ENCODE measurements at regions of chr14 and their contacts with region 1.

Region 1: DNA sequence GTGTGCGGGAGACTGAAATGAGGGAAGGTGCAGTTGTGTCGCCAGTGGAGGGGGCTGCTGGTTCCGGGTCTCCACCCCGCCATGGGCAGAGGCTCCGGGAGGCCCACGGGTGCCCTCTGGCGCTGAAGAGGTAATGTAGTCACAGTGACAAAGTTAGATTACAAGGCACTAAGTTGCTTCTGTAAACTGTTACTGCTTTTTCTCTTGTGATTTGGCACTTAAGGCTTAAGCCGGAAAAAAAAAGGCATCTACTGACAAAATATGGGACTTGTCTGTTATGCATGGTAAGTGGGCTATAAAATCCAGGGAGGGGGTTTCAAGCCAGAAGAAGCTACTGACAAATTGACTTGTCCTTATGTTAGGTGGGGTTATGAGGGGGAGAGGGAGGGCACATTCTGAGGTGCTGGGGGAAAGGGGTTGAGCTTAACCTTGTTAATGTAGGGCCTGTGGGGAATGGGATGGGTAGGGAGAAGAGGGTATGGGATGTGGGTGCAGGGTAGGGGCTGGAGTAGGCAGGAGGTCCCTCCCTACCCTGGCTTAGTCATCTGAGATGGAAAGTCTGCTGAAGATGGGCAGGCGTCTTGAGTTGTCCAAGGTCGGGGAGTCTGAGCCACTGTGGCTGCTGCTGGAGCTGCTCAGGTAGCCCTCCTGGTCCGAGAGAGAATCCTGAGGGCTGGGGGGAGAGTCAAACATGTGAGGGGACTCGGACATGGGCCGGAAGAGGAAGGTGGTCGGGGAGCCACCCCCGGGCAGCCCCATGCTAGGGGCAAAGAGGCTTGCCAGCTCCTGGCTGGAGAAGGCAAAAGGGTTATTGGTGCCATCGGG is 3.7 kb downstream of the ZFP36L1 start:
- DNase-seq: peak; percentile 84 to 90 (median 87)
- H3K4me3 ChIP-seq: peak overlapping the region; percentile 98 to 100
- H3K4me3 Mint-ChIP-seq: peak overlapping the region; percentile 88 to 100 (median 94)
- H3K27ac ChIP-seq: peak overlapping the region; percentile 99
- H3K27ac Mint-ChIP-seq: peak overlapping the region; percentile 96 to 100 (median 98)
- H3K4me1 ChIP-seq: peaks cover 52% of the 10 kb centered on the region
- H3K4me1 Mint-ChIP-seq: peaks cover 41 to 84% (median 53%) of the 10 kb centered on the region in 4 donors
- H3K27me3 ChIP-seq: no peaks in the 10 kb centered on the region
- H3K27me3 Mint-ChIP-seq: peaks cover 0 to 6% of the 10 kb centered on the region in 2 donors

Region 2: GRCh38 chr14:68248481-68249255 is 540.5 kb before region 1 on chr14:
- CTCF ChIA-PET with region 1: interaction called, 199 read pairs
- POLR2A ChIA-PET with region 1: interaction called, 210 read pairs
- intact Hi-C with region 1: loop called (anchors 1 kb)
- DNase-seq: peak; percentile 43 to 65 (median 62)
- H3K4me3 ChIP-seq: no peak overlapping the region
- H3K4me3 Mint-ChIP-seq: no peak overlapping the region
- H3K27ac ChIP-seq: no peak overlapping the region
- H3K27ac Mint-ChIP-seq: peak overlapping the region in 3 of 7 donors; percentile 55 to 61 (median 61)
- H3K4me1 ChIP-seq: peaks cover 24% of the 10 kb centered on the region
- H3K4me1 Mint-ChIP-seq: peaks cover 12 to 38% (median 24%) of the 10 kb centered on the region in 4 donors
- H3K27me3 ChIP-seq: no peaks in the 10 kb centered on the region
- H3K27me3 Mint-ChIP-seq: no peaks in the 10 kb centered on the region

Region 3: GRCh38 chr14:68283378-68284123 is 505.7 kb before region 1 on chr14:
- CTCF ChIA-PET with region 1: interaction called, 65 read pairs
- POLR2A ChIA-PET with region 1: interaction called, 207 read pairs
- intact Hi-C with region 1: loop called (anchors 1 kb)
- DNase-seq: peak; percentile 47 to 77 (median 68)
- H3K4me3 ChIP-seq: peak overlapping the region in 1 of 2 donors; percentile 1
- H3K4me3 Mint-ChIP-seq: peak overlapping the region in 7 of 8 donors; percentile 44 to 81 (median 75)
- H3K27ac ChIP-seq: peak overlapping the region; percentile 73
- H3K27ac Mint-ChIP-seq: peak overlapping the region; percentile 94 to 99 (median 95)
- H3K4me1 ChIP-seq: peaks cover 74% of the 10 kb centered on the region
- H3K4me1 Mint-ChIP-seq: peaks cover 60 to 90% (median 73%) of the 10 kb centered on the region in 4 donors
- H3K27me3 ChIP-seq: no peaks in the 10 kb centered on the region
- H3K27me3 Mint-ChIP-seq: no peaks in the 10 kb centered on the region

Region 4: DNA sequence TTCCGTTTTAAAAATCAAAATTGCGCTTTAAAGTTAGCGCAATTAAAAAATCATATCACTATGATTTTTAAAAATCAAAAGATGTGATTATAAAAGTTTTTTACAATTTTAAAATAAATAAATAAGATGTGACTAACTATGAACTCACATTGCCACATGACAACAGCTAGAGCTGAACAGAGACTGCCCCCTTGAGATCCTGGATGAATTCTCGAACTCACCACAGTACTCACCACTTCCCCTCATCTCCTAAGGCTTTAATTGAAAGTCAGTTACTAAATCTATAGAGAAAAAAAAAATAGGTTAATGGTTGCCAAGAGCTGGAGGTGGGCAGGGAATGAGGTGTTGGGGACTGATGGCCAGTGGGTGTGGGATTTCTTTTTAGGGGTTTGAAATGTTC is 380.5 kb before region 1 on chr14:
- CTCF ChIA-PET with region 1: interaction called, 9 read pairs
- POLR2A ChIA-PET with region 1: interaction called, 11 read pairs
- intact Hi-C with region 1: no loop called
- DNase-seq: peak in 4 of 5 donors; percentile 7 to 28 (median 18)
- H3K4me3 ChIP-seq: no peak overlapping the region
- H3K4me3 Mint-ChIP-seq: peak overlapping the region in 2 of 8 donors; percentile 9 to 14
- H3K27ac ChIP-seq: no peak overlapping the region
- H3K27ac Mint-ChIP-seq: peak overlapping the region in 1 of 7 donors; percentile 10
- H3K4me1 ChIP-seq: peaks cover 26% of the 10 kb centered on the region
- H3K4me1 Mint-ChIP-seq: peaks cover 27 to 39% (median 31%) of the 10 kb centered on the region in 4 donors
- H3K27me3 ChIP-seq: no peaks in the 10 kb centered on the region
- H3K27me3 Mint-ChIP-seq: no peaks in the 10 kb centered on the region

Region 5: GRCh38 chr14:68440820-68441219 is 348.4 kb before region 1 on chr14:
- CTCF ChIA-PET with region 1: no interaction called
- POLR2A ChIA-PET with region 1: no interaction called
- intact Hi-C with region 1: no loop called
- DNase-seq: no peak
- H3K4me3 ChIP-seq: no peak overlapping the region
- H3K4me3 Mint-ChIP-seq: no peak overlapping the region
- H3K27ac ChIP-seq: no peak overlapping the region
- H3K27ac Mint-ChIP-seq: no peak overlapping the region
- H3K4me1 ChIP-seq: no peaks in the 10 kb centered on the region
- H3K4me1 Mint-ChIP-seq: peaks cover 0 to 5% (median 2%) of the 10 kb centered on the region in 4 donors
- H3K27me3 ChIP-seq: no peaks in the 10 kb centered on the region
- H3K27me3 Mint-ChIP-seq: no peaks in the 10 kb centered on the region

Region 6: GRCh38 chr14:68563246-68564131 is 225.7 kb before region 1 on chr14:
- CTCF ChIA-PET with region 1: interaction called, 4 read pairs
- POLR2A ChIA-PET with region 1: interaction called, 10 read pairs
- intact Hi-C with region 1: no loop called
- DNase-seq: no peak
- H3K4me3 ChIP-seq: no peak overlapping the region
- H3K4me3 Mint-ChIP-seq: no peak overlapping the region
- H3K27ac ChIP-seq: no peak overlapping the region
- H3K27ac Mint-ChIP-seq: peak overlapping the region in 1 of 7 donors; percentile 49
- H3K4me1 ChIP-seq: peaks cover 17% of the 10 kb centered on the region
- H3K4me1 Mint-ChIP-seq: peaks cover 16 to 51% (median 27%) of the 10 kb centered on the region in 4 donors
- H3K27me3 ChIP-seq: no peaks in the 10 kb centered on the region
- H3K27me3 Mint-ChIP-seq: no peaks in the 10 kb centered on the region

Region 7: GRCh38 chr14:68685419-68686204 is 103.6 kb before region 1 on chr14:
- CTCF ChIA-PET with region 1: interaction called, 68 read pairs
- POLR2A ChIA-PET with region 1: interaction called, 581 read pairs
- intact Hi-C with region 1: loop called (anchors 1 kb)
- DNase-seq: peak; percentile 84 to 97 (median 89)
- H3K4me3 ChIP-seq: peak overlapping the region in 1 of 2 donors; percentile 11
- H3K4me3 Mint-ChIP-seq: peak overlapping the region; percentile 49 to 85 (median 70)
- H3K27ac ChIP-seq: peak overlapping the region; percentile 70
- H3K27ac Mint-ChIP-seq: peak overlapping the region; percentile 93 to 98 (median 97)
- H3K4me1 ChIP-seq: peaks cover 58% of the 10 kb centered on the region
- H3K4me1 Mint-ChIP-seq: peaks cover 48 to 66% (median 60%) of the 10 kb centered on the region in 4 donors
- H3K27me3 ChIP-seq: no peaks in the 10 kb centered on the region
- H3K27me3 Mint-ChIP-seq: no peaks in the 10 kb centered on the region

Region 8: DNA sequence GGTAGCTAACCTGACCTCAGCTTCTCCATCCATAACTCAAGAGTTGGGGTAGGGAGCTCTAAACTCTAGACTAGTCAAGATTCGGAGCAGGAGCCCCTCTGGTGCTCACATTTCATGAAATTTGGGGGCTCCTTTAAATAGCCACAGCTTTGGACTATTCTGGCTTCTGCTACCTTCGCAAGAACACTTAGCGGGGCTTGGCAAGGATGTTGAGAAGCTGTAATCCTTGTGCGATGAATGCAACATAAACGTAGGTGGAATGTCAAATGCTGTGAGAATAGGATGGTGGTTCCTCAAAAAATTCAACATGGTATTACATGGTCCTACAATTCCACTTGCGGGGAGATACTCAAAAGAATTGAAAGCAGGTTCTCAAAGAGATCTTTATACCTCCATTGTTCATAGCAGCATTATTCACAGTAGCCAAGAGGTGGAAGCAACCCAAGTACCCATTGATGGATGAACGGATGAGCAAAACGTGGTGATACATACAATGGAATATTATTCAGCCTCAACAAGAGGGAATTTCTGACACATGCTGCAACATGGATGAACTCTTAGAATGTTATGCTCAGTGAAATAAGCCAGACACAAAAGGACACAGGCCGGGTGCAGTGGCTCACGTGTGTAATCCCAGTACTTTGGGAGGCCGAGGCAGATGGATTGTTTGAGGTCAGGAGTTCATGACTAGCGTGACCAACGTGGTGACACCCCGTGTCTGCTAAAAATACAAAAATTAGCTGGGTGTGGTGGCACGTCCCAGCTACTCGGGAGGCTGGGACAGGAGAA is 116.1 kb after region 1 on chr14:
- CTCF ChIA-PET with region 1: no interaction called
- POLR2A ChIA-PET with region 1: no interaction called
- intact Hi-C with region 1: no loop called
- DNase-seq: no peak
- H3K4me3 ChIP-seq: no peak overlapping the region
- H3K4me3 Mint-ChIP-seq: no peak overlapping the region
- H3K27ac ChIP-seq: no peak overlapping the region
- H3K27ac Mint-ChIP-seq: no peak overlapping the region
- H3K4me1 ChIP-seq: no peaks in the 10 kb centered on the region
- H3K4me1 Mint-ChIP-seq: no peaks in the 10 kb centered on the region
- H3K27me3 ChIP-seq: no peaks in the 10 kb centered on the region
- H3K27me3 Mint-ChIP-seq: no peaks in the 10 kb centered on the region

Region 9: DNA sequence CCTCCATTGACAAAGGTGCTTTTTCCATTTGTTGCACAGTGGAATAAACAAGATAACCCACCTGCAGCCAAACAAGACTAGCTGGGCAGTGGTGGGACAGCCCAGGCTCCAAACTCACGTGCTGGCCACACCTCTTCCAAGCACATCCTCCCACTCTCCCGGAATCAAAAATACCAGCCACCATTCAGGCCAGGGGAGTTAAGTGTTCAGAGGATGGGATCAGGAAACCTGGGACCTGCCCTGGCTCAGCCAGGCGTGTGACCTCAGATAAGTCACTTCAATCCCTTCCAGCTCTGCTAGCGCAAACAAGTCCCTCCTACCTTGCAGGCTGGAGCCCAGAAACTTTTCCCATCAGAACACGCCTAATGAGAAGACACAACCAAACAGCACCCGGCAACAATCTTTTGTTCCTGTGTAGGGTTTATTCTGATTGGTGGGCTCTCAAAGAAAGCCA is 146.6 kb after region 1 on chr14:
- CTCF ChIA-PET with region 1: no interaction called
- POLR2A ChIA-PET with region 1: no interaction called
- intact Hi-C with region 1: no loop called
- DNase-seq: no peak
- H3K4me3 ChIP-seq: no peak overlapping the region
- H3K4me3 Mint-ChIP-seq: no peak overlapping the region
- H3K27ac ChIP-seq: no peak overlapping the region
- H3K27ac Mint-ChIP-seq: peak overlapping the region in 1 of 7 donors; percentile 60
- H3K4me1 ChIP-seq: peaks cover 27% of the 10 kb centered on the region
- H3K4me1 Mint-ChIP-seq: peaks cover 11 to 45% (median 22%) of the 10 kb centered on the region in 4 donors
- H3K27me3 ChIP-seq: no peaks in the 10 kb centered on the region
- H3K27me3 Mint-ChIP-seq: no peaks in the 10 kb centered on the region

Region 10: GRCh38 chr14:69268763-69269162 is 479.6 kb after region 1 on chr14:
- CTCF ChIA-PET with region 1: no interaction called
- POLR2A ChIA-PET with region 1: no interaction called
- intact Hi-C with region 1: no loop called
- DNase-seq: no peak
- H3K4me3 ChIP-seq: no peak overlapping the region
- H3K4me3 Mint-ChIP-seq: no peak overlapping the region
- H3K27ac ChIP-seq: no peak overlapping the region
- H3K27ac Mint-ChIP-seq: no peak overlapping the region
- H3K4me1 ChIP-seq: no peaks in the 10 kb centered on the region
- H3K4me1 Mint-ChIP-seq: no peaks in the 10 kb centered on the region
- H3K27me3 ChIP-seq: no peaks in the 10 kb centered on the region
- H3K27me3 Mint-ChIP-seq: peaks cover 5 to 12% of the 10 kb centered on the region in 2 donors